Activated CD4-positive, alpha-beta T cell treated with anti-CD3 and anti-CD28 coated beads, Interleukin-2, amount 10 ng/mL, durations not matched to agents 24 days and 14 days (primary cell): ENCODE measurements at regions of chr20 and their contacts with region 1.

Region 1: GRCh38 chr20:51595058-51595532 is 52.6 kb upstream of the NFATC2 start:
- DNase-seq: peak; percentile 93
- H3K4me3 Mint-ChIP-seq: peak overlapping the region; percentile 58
- H3K27ac Mint-ChIP-seq: peak overlapping the region; percentile 63
- H3K4me1 Mint-ChIP-seq: peaks cover 43% of the 10 kb centered on the region
- H3K27me3 Mint-ChIP-seq: peaks cover 2% of the 10 kb centered on the region

Region 2: DNA sequence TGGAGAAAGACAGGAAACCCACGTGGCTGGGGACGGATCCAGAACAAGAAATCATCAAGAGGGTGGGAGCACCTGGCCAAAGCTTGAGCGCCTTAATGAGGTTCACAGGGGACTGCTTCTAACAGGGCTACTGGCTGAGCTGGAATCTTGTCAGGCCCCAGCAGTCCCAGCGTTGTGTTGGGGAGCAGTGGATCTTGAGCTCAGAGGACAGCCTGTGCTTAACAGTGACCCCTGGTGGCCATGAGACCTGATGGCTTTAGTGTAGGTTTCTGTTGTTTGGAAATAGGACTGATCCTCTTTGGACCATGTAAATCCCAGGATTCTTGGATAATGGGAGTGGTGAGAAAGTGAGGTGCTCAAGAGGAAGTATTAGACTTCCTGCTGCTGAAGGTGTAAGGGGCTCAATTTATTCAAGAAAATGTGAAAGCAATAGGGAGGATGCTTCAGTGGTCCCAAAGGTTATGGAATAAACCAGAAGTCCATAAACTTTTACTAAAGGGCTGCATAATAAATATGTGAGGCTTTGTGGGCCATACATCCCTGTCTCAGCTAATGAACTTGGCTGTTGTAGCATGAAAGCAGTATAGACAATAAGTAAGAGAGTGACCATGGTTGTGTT is 268.8 kb before region 1 on chr20:
- intact Hi-C with region 1: no loop called
- DNase-seq: no peak
- H3K4me3 Mint-ChIP-seq: no peak overlapping the region
- H3K27ac Mint-ChIP-seq: no peak overlapping the region
- H3K4me1 Mint-ChIP-seq: no peaks in the 10 kb centered on the region
- H3K27me3 Mint-ChIP-seq: no peaks in the 10 kb centered on the region

Region 3: GRCh38 chr20:51372176-51372803 is 222.8 kb before region 1 on chr20:
- intact Hi-C with region 1: loop called (anchors 1 kb)
- DNase-seq: peak; percentile 87
- H3K4me3 Mint-ChIP-seq: no peak overlapping the region
- H3K27ac Mint-ChIP-seq: no peak overlapping the region
- H3K4me1 Mint-ChIP-seq: peaks cover 16% of the 10 kb centered on the region
- H3K27me3 Mint-ChIP-seq: no peaks in the 10 kb centered on the region